ENCODE measurements at regions of chr22 and their contacts with region 1.

Region 1: GRCh38 chr22:41263704-41264103 is 22.3 kb downstream of the RANGAP1 start:
- DNase-seq: no peak
- H3K4me3 ChIP-seq: no peak overlapping the region
- H3K27ac ChIP-seq: no peak overlapping the region
- H3K4me1 ChIP-seq: no peaks in the 10 kb centered on the region
- H3K27me3 ChIP-seq: no peaks in the 10 kb centered on the region

Region 2: DNA sequence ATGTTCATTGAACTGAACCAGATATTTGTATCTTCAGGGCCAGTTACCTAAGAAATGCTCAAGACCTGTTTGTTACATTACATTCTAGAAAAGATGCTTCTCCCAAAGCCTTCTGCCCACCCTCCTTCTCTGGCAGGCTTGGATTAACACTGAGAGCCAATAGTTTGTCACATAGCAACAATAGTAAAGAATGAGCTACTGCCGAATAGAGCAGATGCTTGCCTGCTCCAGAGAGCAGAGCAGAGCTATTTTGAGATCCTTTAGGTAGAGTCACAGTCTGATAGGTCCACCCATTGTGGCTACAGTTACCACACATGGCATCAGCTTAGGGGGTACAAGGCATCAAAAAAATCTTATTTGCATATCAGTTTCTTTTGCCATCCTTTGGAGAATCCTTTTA is 184.8 kb before region 1 on chr22:
- CTCF ChIA-PET with region 1: no interaction called
- POLR2A ChIA-PET with region 1: no interaction called
- DNase-seq: no peak
- H3K4me3 ChIP-seq: no peak overlapping the region
- H3K27ac ChIP-seq: no peak overlapping the region
- H3K4me1 ChIP-seq: no peaks in the 10 kb centered on the region
- H3K27me3 ChIP-seq: no peaks in the 10 kb centered on the region

Region 3: DNA sequence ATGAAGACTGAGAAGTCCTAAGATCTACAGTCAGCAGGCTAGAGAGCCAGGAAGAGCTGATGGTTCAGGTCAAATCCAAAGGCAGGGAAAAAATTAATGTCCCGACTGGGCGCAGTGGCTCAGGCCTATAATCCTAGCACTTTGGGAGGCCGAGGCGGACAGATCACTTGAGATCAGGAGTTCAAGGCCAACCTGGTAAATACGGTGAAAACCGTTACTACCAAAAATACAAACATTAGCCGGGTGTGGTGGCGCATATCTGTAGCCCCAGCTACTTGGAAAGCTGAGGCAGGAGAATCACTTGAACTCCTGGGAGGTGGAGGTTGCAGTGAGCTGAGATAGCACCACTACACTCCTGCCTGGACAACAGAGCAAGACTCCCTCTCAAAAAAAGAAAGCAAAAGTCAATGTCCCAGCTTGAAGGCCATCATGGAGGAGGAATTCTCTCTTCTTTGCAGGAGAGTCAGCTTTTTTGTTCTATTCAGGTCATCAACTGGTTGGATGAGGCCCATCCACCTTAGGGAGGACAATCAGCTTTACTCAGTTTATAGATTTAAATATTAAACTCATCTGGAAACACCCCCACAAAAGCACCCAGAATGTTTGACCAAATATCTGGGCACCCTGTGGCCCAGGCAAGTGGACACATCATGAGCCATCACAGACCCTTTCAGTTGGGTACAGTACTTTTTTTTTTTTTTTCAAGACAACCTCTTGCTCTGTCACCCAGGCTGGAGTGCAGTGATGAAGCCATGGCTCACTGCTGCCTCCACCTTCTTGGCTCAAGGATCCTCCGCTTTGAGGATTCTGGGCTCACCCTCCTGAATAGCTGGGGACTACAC is 33.3 kb after region 1 on chr22:
- CTCF ChIA-PET with region 1: no interaction called
- POLR2A ChIA-PET with region 1: interaction called, 10 read pairs
- DNase-seq: no peak
- H3K4me3 ChIP-seq: no peak overlapping the region
- H3K27ac ChIP-seq: no peak overlapping the region
- H3K4me1 ChIP-seq: peaks cover 2 to 6% (median 4%) of the 10 kb centered on the region in 4 experiments
- H3K27me3 ChIP-seq: no peaks in the 10 kb centered on the region